ENCODE measurements at regions of chr14 and their contacts with region 1.

Region 1: DNA sequence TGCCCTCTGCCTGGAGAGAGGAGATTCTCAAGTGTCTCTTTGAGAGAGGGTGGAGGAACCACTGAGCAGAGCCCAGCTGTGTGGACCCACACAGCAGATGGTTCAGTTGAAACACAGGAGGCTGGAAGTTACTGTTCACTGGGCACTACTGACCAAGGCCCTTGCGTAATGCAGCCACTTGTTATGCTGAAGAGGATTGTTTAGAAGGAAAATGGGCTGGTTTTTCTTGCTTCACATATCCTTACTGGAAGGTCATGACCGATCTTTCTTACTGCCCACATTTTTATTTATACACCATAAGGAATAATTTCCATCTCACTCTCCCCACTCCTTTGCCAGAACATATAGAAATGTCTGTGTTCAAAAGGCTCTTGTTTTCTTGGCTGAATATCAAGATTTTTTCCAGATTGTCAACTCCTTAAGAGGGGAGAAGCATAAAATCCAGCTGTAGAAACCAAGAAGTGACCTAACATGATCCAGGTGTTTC is 375.1 kb upstream of the DDHD1 start:
- DNase-seq: no peak
- CTCF ChIP-seq: no peak

Region 2: DNA sequence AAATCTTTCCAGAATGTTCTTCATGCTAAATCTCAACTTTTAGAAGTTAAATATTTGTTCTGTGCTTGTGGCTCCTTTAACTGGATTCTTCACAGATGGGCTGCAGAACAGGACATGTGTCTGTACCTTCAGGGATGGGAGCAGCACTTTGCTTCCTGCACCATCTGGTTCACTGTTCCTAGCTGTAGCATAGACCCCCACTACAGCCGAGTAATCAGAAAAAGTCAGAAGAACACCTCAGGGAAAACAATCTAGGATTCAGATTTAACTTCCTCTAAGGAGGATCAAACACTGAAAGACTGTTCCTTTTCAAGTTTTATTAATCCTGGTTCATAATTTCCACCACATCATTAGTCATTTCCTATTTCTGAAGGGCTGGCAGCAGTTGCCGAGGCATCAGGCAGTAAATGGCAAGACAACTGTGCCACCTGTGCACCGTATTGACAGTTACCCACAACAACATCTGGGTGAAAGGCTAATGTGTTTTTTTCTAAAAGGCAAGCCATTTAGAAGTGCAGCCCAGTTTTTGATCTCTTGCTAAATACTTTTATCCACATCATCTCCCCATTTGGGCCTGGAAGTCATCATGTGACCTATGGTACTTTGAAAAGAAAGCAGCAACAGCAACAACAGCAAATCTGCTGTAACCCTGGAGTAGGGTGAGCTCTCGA is 641.2 kb after region 1 on chr14:
- in situ Hi-C with region 1: loop called (anchors 10 kb)
- DNase-seq: no peak
- CTCF ChIP-seq: no peak